Activated CD4-positive, alpha-beta T cell treated with anti-CD3 and anti-CD28 coated beads for 36 hours (primary cell): ENCODE measurements at regions of chr16 and their contacts with region 1.

Region 1: GRCh38 chr16:16191493-16192167 is 31.7 kb downstream of the ABCC6 start:
- DNase-seq: no peak
- ATAC-seq: no peak
- H3K4me3 Mint-ChIP-seq: no peak overlapping the region
- H3K27ac Mint-ChIP-seq: no peak overlapping the region
- H3K4me1 Mint-ChIP-seq: no peaks in the 10 kb centered on the region
- H3K27me3 Mint-ChIP-seq: peaks cover 3% of the 10 kb centered on the region

Region 2: GRCh38 chr16:15502041-15502725 is 689.4 kb before region 1 on chr16:
- CTCF ChIA-PET with region 1: no interaction called
- POLR2A ChIA-PET with region 1: no interaction called
- intact Hi-C with region 1: no loop called
- DNase-seq: no peak
- ATAC-seq: no peak
- H3K4me3 Mint-ChIP-seq: no peak overlapping the region
- H3K27ac Mint-ChIP-seq: no peak overlapping the region
- H3K4me1 Mint-ChIP-seq: peaks cover 2% of the 10 kb centered on the region
- H3K27me3 Mint-ChIP-seq: no peaks in the 10 kb centered on the region

Region 3: GRCh38 chr16:15765880-15766279 is 425.8 kb before region 1 on chr16:
- CTCF ChIA-PET with region 1: interaction called, 4 read pairs
- POLR2A ChIA-PET with region 1: no interaction called
- intact Hi-C with region 1: loop called (anchors 1 kb)
- DNase-seq: peak; percentile 44
- ATAC-seq: peak; percentile 90
- H3K4me3 Mint-ChIP-seq: no peak overlapping the region
- H3K27ac Mint-ChIP-seq: no peak overlapping the region
- H3K4me1 Mint-ChIP-seq: no peaks in the 10 kb centered on the region
- H3K27me3 Mint-ChIP-seq: peaks cover 7% of the 10 kb centered on the region

Region 4: GRCh38 chr16:16175296-16175695 is 16.3 kb before region 1 on chr16:
- CTCF ChIA-PET with region 1: interaction called, 3 read pairs
- POLR2A ChIA-PET with region 1: no interaction called
- intact Hi-C with region 1: loop called in 1 of 2 experiments (anchors 2 kb)
- DNase-seq: no peak
- ATAC-seq: no peak
- H3K4me3 Mint-ChIP-seq: no peak overlapping the region
- H3K27ac Mint-ChIP-seq: no peak overlapping the region
- H3K4me1 Mint-ChIP-seq: no peaks in the 10 kb centered on the region
- H3K27me3 Mint-ChIP-seq: no peaks in the 10 kb centered on the region